OCI-LY7 (cell line): ENCODE measurements at regions of chr11 and their contacts with region 1.

Region 1: DNA sequence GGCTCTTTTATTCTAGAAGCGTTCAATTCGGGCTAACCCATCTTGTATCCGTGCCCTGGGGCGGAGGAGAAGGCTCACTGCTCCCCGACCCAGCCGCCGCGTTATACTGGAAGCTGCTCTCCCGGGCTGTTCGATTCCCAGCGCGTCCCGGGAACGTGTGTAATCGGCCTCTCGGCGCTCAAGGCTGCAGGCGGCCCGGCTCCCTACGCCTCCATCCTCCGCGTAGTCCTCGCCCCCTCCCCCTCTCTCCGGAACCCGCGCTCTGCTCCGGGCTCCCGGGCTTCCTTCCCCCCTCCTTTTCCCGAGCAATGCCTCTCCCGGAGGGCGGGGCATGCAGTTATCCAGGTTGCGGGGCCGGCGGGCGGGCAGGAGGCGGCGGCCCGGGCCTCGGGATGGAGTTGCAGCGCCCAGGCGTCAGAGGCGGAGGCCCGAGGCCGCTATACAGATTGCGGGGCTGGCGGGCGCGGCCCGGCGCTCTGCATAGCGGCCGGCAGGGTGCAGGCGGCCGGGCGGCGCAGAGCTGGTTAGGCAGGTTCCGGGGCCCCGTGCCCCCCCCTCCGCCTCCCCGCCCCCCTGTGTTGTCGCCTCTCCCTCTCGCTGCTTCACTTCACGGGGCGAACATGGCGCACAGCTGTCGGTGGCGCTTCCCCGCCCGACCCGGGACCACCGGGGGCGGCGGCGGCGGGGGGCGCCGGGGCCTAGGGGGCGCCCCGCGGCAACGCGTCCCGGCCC is at the start of gene KMT2A:
- DNase-seq: peak; percentile 97
- H3K4me3 ChIP-seq: peak within 1 kb of the TSS; percentile 87
- H3K27ac ChIP-seq: peak within 1 kb of the TSS; percentile 93
- H3K4me1 ChIP-seq: peaks cover 40% of the 10 kb centered on the region
- CTCF ChIP-seq: no peak; the same call in 1 of the 2 replicates
- total RNA-seq, gene KMT2A: 55.8 and 58.8 TPM in 2 replicates

Region 2: DNA sequence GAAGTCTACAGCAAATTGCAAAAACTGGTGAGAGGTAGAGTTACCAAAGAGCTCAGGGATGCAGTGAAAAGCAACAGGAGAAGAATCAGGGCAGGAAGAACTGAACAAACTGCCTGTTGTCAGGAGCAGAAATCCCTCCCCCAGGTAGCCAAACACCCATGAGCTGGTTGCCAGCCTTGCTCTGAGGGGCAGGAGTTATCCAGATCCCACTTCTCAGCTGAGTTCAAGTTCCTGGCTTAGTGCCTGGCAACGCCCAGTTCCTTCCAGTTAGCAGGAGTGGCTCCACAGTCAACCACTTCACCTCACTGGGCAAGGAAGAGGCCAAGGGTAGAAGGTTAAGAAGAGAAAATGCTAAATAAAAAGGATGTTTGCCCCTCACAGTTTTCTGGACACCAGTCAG is 170.1 kb before region 1 on chr11:
- CTCF ChIA-PET with region 1: no interaction called
- POLR2A ChIA-PET with region 1: no interaction called
- intact Hi-C with region 1: no loop called
- DNase-seq: no peak
- H3K4me3 ChIP-seq: no peak overlapping the region
- H3K27ac ChIP-seq: no peak overlapping the region
- H3K4me1 ChIP-seq: peaks cover 8% of the 10 kb centered on the region
- CTCF ChIP-seq: no peak

Region 3: DNA sequence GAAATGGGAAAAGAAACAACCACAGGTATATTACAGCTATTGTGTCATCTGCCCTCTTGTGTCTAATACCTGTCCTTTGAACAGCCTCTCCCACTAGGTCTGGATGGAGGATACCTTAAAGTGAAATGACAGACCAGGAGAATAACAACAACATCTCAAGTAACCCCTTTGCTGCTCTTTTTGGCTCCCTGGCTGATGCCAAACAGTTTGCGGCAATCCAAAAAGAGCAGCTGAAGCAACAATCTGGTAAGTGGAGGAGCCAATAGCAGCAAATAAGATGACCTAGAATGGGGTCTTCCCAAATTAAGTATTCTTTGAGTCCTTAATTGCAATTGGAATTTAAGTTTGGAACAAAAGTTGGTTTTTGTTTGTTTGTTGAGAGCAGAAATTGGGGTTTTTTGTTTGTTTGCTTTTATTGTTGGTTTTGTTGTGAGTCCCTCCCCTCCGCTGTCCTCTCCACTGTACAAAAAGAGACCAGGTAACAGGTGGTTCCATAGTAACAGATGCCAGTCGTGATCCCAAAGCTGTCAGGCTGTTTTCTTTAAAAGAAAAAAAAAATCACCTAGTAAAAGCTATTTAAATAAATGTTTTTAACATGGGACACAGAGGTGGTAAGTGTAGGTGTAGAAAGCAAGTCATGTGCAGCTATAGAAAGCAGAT is 71.0 kb before region 1 on chr11:
- CTCF ChIA-PET with region 1: no interaction called
- POLR2A ChIA-PET with region 1: no interaction called
- intact Hi-C with region 1: loop called (anchors 5 kb)
- DNase-seq: no peak
- H3K4me3 ChIP-seq: no peak overlapping the region
- H3K27ac ChIP-seq: no peak overlapping the region
- H3K4me1 ChIP-seq: peaks cover 12% of the 10 kb centered on the region
- CTCF ChIP-seq: no peak

Region 4: GRCh38 chr11:118448294-118448693 is 12.2 kb after region 1 on chr11:
- CTCF ChIA-PET with region 1: no interaction called
- POLR2A ChIA-PET with region 1: interaction called, 14 read pairs
- intact Hi-C with region 1: no loop called
- DNase-seq: no peak
- H3K4me3 ChIP-seq: no peak overlapping the region
- H3K27ac ChIP-seq: no peak overlapping the region
- H3K4me1 ChIP-seq: peaks cover 3% of the 10 kb centered on the region
- CTCF ChIP-seq: no peak

Region 5: GRCh38 chr11:118530408-118531339 is 94.6 kb after region 1 on chr11 and contains the start of gene TMEM25:
- CTCF ChIA-PET with region 1: no interaction called
- POLR2A ChIA-PET with region 1: no interaction called
- intact Hi-C with region 1: loop called (anchors 1 kb)
- DNase-seq: peak; percentile 82
- H3K4me3 ChIP-seq: peak within 1 kb of the TSS; percentile 90
- H3K27ac ChIP-seq: no peak within 1 kb of the TSS
- H3K4me1 ChIP-seq: peaks cover 14% of the 10 kb centered on the region
- CTCF ChIP-seq: no peak
- total RNA-seq, gene TMEM25: 14.0 and 16.0 TPM in 2 replicates

Region 6: GRCh38 chr11:118560806-118561205 is 124.7 kb after region 1 on chr11:
- CTCF ChIA-PET with region 1: no interaction called
- POLR2A ChIA-PET with region 1: no interaction called
- intact Hi-C with region 1: no loop called
- DNase-seq: no peak
- H3K4me3 ChIP-seq: no peak overlapping the region
- H3K27ac ChIP-seq: no peak overlapping the region
- H3K4me1 ChIP-seq: no peaks in the 10 kb centered on the region
- CTCF ChIP-seq: no peak

Region 7: DNA sequence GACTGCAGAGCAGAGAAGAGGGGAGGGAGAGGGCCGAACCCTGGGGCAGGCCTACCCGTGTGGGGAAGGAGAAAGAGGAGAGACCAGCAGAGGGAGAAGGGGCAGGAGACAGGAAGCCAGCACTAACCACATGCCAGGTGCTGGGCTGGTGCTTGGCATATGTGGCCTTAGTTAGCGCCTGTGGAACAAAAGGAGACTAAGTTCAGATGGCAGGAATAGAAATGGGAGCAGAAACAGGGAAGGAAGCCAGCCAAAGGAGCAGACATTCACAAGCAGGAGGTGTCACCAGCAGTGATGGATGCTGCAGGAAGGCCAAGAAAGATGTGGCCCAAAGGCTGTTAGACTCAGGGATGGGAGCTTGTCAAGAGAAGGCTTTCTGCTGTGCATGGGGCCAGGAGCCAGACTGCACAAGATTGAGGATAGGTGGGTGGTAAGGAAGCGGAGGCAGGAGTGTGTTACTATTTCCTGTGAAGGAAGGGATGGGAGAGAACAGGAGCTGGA is 216.7 kb after region 1 on chr11:
- CTCF ChIA-PET with region 1: no interaction called
- POLR2A ChIA-PET with region 1: no interaction called
- intact Hi-C with region 1: no loop called
- DNase-seq: no peak
- H3K4me3 ChIP-seq: no peak overlapping the region
- H3K27ac ChIP-seq: no peak overlapping the region
- H3K4me1 ChIP-seq: no peaks in the 10 kb centered on the region
- CTCF ChIP-seq: no peak